ENCODE measurements at regions of chr16 and their contacts with region 1.

Region 1: GRCh38 chr16:63331111-63331510 is 1294.9 kb upstream of the CDH8 start:
- DNase-seq: no peak
- H3K4me3 ChIP-seq: no peak overlapping the region
- H3K27ac ChIP-seq: no peak overlapping the region
- H3K4me1 ChIP-seq: no peaks in the 10 kb centered on the region
- H3K27me3 ChIP-seq: no peaks in the 10 kb centered on the region
- CTCF ChIP-seq: no peak
- POLR2A ChIP-seq: no peak

Region 2: DNA sequence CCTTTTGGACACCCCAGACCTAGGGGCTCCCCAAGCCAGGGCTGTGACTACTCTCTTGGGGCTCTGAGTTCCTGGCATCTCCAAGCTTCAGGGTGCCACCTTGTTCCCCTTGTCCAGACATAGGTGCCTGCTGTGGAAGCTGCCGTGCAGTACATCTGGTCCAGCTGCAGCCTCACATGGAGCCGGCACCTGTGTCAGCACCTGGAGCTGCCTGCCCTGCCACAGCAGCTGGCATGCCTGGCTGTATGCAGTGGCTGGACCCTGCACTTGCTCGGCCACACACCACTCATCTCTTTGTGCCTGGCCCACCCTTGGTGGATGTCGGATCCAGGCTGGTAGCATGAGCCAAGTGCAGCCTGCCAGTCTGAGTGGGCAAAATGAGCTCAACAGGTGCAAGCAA is 1015.0 kb after region 1 on chr16:
- intact Hi-C with region 1: loop called (anchors 5 kb)
- DNase-seq: no peak
- H3K4me3 ChIP-seq: no peak overlapping the region
- H3K27ac ChIP-seq: no peak overlapping the region
- H3K4me1 ChIP-seq: no peaks in the 10 kb centered on the region
- H3K27me3 ChIP-seq: no peaks in the 10 kb centered on the region
- CTCF ChIP-seq: no peak
- POLR2A ChIP-seq: no peak

Measured in breast epithelium (tissue), 4 donors.